OCI-LY7 (cell line): ENCODE measurements at regions of chr18 and their contacts with region 1.

Region 1: DNA sequence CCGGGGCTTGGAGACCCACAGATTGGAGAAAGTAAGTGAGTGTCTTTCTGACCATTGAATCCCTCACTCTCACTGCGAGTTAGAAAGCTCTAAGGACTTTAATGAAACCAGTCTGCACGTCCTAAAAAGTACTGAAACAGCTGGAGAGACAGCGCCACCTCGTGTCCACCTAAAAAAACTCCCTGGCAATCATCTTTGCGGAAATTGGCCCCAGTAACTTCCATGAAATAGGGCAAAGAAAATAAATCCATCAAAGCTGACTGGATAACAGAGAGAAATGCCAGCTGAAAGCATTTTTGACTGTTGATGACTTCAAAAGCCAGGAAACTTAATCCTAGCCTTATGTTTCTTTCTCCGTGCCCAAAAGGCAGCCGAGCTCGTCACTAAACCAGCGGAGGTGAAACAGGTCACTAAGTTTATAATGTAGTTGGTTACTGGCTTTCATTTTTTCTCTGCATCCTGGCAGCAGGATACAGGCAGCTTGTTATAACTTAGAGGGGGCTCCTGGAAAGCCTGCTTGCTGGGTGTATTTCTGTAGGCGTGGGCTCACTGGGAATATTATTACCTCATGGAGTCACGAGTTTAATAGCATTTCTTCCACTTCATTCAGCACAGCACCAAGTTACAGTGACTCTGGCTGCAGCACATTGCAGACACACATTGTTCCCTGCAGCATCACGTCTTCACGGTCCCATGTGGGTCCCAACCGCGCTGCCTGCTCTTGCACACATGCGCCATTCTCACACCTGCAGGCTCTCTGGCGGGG is 266.5 kb downstream of the HRH4 start:
- DNase-seq: peak; percentile 72
- H3K4me3 ChIP-seq: no peak overlapping the region
- H3K27ac ChIP-seq: no peak overlapping the region
- H3K4me1 ChIP-seq: no peaks in the 10 kb centered on the region
- CTCF ChIP-seq: peak; percentile 96

Region 2: GRCh38 chr18:24362758-24363157 is 364.2 kb before region 1 on chr18:
- CTCF ChIA-PET with region 1: no interaction called
- POLR2A ChIA-PET with region 1: no interaction called
- intact Hi-C with region 1: loop called (anchors 5 kb)
- DNase-seq: no peak
- H3K4me3 ChIP-seq: no peak overlapping the region
- H3K27ac ChIP-seq: no peak overlapping the region
- H3K4me1 ChIP-seq: no peaks in the 10 kb centered on the region
- CTCF ChIP-seq: no peak

Region 3: GRCh38 chr18:24543805-24544498 is 183.0 kb before region 1 on chr18:
- CTCF ChIA-PET with region 1: no interaction called
- POLR2A ChIA-PET with region 1: no interaction called
- intact Hi-C with region 1: loop called (anchors 2 kb)
- DNase-seq: peak; percentile 21
- H3K4me3 ChIP-seq: no peak overlapping the region
- H3K27ac ChIP-seq: no peak overlapping the region
- H3K4me1 ChIP-seq: no peaks in the 10 kb centered on the region
- CTCF ChIP-seq: peak; percentile 81

Region 4: DNA sequence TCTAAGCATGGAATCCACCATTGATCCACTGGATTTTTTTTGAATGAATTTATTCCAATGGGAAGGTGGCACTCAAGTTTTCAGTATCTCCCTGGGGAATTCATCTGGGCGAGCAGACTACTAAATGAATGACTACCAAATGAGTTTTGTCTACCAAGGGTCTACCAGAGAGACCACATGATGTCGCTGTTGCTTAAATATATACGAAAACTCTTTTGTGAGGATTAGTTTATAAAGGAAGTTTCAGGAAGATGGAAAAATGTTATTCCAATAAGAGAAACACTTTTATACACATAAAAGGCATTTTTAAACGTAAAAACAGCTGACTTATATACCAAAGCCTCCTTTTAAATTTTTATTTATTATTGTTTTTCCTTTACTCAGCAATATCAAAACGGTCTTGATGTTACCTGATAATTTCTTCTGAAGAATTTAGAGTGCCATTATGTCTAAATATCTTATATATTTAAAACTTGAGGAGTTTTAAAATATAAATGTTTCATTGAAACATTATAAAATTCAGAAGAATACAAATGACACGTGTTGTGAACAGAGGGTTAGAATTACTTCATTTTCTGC is 126.7 kb before region 1 on chr18:
- CTCF ChIA-PET with region 1: no interaction called
- POLR2A ChIA-PET with region 1: interaction called, 3 read pairs
- intact Hi-C with region 1: loop called (anchors 1 kb)
- DNase-seq: peak; percentile 66
- H3K4me3 ChIP-seq: no peak overlapping the region
- H3K27ac ChIP-seq: no peak overlapping the region
- H3K4me1 ChIP-seq: no peaks in the 10 kb centered on the region
- CTCF ChIP-seq: peak; percentile 91

Region 5: GRCh38 chr18:24704946-24705630 is 21.8 kb before region 1 on chr18:
- CTCF ChIA-PET with region 1: no interaction called
- POLR2A ChIA-PET with region 1: no interaction called
- intact Hi-C with region 1: no loop called
- DNase-seq: no peak
- H3K4me3 ChIP-seq: no peak overlapping the region
- H3K27ac ChIP-seq: no peak overlapping the region
- H3K4me1 ChIP-seq: no peaks in the 10 kb centered on the region
- CTCF ChIP-seq: no peak